ENCODE measurements at regions of chr6 and their contacts with region 1.

Region 1: DNA sequence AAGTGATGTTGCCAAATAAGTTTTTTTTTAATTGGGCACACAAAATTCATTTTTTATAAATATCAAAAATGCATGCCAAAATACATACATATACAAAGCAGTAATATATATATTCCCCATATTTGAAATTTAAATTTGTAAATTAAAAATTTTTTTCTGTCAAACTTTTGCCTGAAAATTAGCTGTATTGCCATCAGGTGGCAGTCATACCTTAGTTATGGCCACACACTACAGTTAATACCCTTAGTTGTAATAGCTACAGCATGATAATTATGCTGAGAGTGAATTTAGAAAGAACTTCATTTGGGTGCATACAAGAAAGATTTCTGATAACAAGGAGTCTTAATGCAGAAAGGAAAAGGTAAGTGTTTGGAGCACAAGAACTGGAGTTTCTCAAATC is 46.2 kb upstream of the SDHAF4 start:
- DNase-seq: peak; percentile 11
- H3K4me3 ChIP-seq: no peak overlapping the region
- H3K27ac ChIP-seq: no peak overlapping the region
- H3K4me1 ChIP-seq: no peaks in the 10 kb centered on the region
- H3K27me3 ChIP-seq: no peaks in the 10 kb centered on the region
- CTCF ChIP-seq: peak; percentile 48; the same call in 1 of the 2 replicates

Region 2: GRCh38 chr6:70686548-70687133 is 166.1 kb after region 1 on chr6:
- CTCF ChIA-PET with region 1: interaction called, 12 read pairs
- POLR2A ChIA-PET with region 1: no interaction called
- intact Hi-C with region 1: loop called (anchors 5 kb)
- DNase-seq: peak; percentile 52
- H3K4me3 ChIP-seq: no peak overlapping the region
- H3K27ac ChIP-seq: no peak overlapping the region
- H3K4me1 ChIP-seq: no peaks in the 10 kb centered on the region
- H3K27me3 ChIP-seq: no peaks in the 10 kb centered on the region
- CTCF ChIP-seq: peak; percentile 79

Region 3: DNA sequence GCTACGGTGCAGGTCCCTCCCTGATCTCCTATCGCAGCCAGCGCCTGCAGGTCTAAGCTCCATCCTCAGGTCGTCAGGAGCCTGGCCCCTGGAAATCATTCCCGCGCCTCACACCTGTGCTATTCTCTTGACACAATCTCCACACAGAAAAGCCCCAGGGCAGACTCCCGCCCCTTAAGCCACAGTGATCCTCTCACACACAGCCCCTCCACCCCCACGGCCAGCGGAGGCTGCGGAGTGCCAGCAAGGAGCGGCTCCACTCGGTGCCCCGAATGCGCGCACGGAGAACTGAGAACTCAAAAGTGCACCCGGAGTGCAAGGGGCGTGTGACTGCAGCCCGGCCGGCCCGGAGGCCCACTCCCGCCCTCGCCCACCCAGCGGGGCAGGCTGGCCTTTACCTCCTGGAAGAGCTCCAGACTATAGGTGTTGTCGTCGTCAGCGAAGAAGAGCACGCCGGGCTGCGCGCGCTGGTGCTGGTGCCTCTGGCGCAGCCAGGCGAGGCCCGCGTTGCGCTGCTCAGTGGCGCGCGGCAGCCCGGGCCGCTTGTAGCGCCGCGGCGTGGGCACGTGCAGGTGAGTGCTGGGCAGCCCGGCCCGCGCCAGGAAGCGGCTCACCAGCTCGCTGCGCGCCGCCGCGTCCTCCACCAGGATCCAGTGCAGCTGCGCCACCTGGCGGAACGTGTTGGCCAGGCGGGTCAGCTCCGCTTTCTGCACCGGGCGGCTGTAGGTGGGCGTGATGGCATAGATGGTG is 435.0 kb after region 1 on chr6:
- CTCF ChIA-PET with region 1: interaction called, 4 read pairs
- POLR2A ChIA-PET with region 1: no interaction called
- intact Hi-C with region 1: loop called (anchors 5 kb)
- DNase-seq: peak; percentile 82
- H3K4me3 ChIP-seq: peak overlapping the region; percentile 45
- H3K27ac ChIP-seq: no peak overlapping the region
- H3K4me1 ChIP-seq: no peaks in the 10 kb centered on the region
- H3K27me3 ChIP-seq: peaks cover 80% of the 10 kb centered on the region
- CTCF ChIP-seq: peak; percentile 87

Measured in A673 (cell line).